ENCODE measurements at regions of chr17 and their contacts with region 1.

Region 1: GRCh38 chr17:76681222-76682137 is 29.3 kb downstream of the MXRA7 start:
- DNase-seq: peak; percentile 57 to 80 (median 62)
- H3K4me3 ChIP-seq: no peak overlapping the region
- H3K4me3 Mint-ChIP-seq: peak overlapping the region in 2 of 7 donors; percentile 61 to 85
- H3K27ac ChIP-seq: no peak overlapping the region
- H3K27ac Mint-ChIP-seq: peak overlapping the region in 7 of 8 donors; percentile 37 to 89 (median 66)
- H3K4me1 ChIP-seq: peaks cover 33% of the 10 kb centered on the region
- H3K4me1 Mint-ChIP-seq: peaks cover 15 to 18% (median 18%) of the 10 kb centered on the region in 3 donors
- H3K27me3 ChIP-seq: no peaks in the 10 kb centered on the region
- H3K27me3 Mint-ChIP-seq: no peaks in the 10 kb centered on the region

Region 2: GRCh38 chr17:76671123-76671911 is 10.2 kb before region 1 on chr17:
- CTCF ChIA-PET with region 1: interaction called, 14 read pairs
- POLR2A ChIA-PET with region 1: interaction called, 11 read pairs
- DNase-seq: peak; percentile 97 to 100 (median 99)
- H3K4me3 ChIP-seq: peak overlapping the region; percentile 80
- H3K4me3 Mint-ChIP-seq: peak overlapping the region; percentile 86 to 95 (median 94)
- H3K27ac ChIP-seq: peak overlapping the region; percentile 69
- H3K27ac Mint-ChIP-seq: peak overlapping the region; percentile 94 to 100 (median 98)
- H3K4me1 ChIP-seq: peaks cover 35% of the 10 kb centered on the region
- H3K4me1 Mint-ChIP-seq: peaks cover 29 to 35% (median 32%) of the 10 kb centered on the region in 3 donors
- H3K27me3 ChIP-seq: no peaks in the 10 kb centered on the region
- H3K27me3 Mint-ChIP-seq: peaks cover 0 to 2% of the 10 kb centered on the region in 2 donors

Region 3: DNA sequence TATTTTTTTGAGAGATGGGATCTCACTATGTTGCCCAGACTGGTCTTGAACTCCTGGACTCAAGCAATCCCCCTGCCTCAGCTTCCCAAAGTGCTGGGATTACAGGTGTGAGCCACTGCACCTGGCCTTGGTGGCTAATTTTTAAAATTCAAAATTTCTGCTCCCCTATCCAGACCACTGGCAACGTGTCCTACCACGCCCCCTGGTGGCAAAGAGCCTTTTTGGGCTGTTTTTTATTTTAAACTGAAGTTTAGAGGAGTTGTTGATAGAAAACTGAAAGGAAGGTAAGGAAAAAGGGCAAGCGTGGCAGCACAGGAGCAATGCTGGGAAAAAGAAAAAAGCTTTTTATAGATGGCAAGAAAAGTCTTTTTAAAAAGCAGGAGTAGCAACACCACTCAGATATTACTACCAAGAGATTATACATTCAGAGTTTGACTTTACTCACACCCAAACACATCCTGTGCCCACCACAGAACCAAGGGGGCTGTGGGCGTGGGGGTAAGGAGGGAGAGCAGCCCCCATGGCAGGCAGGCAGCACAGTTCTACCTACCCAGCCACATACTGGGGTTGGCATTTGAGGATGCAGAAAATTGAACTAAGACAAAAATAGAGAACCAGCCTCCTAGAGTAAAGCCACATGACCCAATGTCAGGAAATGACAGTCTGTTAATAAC is 33.5 kb after region 1 on chr17:
- CTCF ChIA-PET with region 1: interaction called, 26 read pairs
- POLR2A ChIA-PET with region 1: no interaction called
- DNase-seq: peak; percentile 64 to 82 (median 67)
- H3K4me3 ChIP-seq: no peak overlapping the region
- H3K4me3 Mint-ChIP-seq: peak overlapping the region; percentile 24 to 75 (median 71)
- H3K27ac ChIP-seq: peak overlapping the region; percentile 57
- H3K27ac Mint-ChIP-seq: peak overlapping the region; percentile 91 to 99 (median 98)
- H3K4me1 ChIP-seq: peaks cover 37% of the 10 kb centered on the region
- H3K4me1 Mint-ChIP-seq: peaks cover 42 to 67% (median 44%) of the 10 kb centered on the region in 3 donors
- H3K27me3 ChIP-seq: no peaks in the 10 kb centered on the region
- H3K27me3 Mint-ChIP-seq: no peaks in the 10 kb centered on the region